Cardiac septum (tissue), 1 donor: ENCODE measurements at regions of chr2 and their contacts with region 1.

Region 1: DNA sequence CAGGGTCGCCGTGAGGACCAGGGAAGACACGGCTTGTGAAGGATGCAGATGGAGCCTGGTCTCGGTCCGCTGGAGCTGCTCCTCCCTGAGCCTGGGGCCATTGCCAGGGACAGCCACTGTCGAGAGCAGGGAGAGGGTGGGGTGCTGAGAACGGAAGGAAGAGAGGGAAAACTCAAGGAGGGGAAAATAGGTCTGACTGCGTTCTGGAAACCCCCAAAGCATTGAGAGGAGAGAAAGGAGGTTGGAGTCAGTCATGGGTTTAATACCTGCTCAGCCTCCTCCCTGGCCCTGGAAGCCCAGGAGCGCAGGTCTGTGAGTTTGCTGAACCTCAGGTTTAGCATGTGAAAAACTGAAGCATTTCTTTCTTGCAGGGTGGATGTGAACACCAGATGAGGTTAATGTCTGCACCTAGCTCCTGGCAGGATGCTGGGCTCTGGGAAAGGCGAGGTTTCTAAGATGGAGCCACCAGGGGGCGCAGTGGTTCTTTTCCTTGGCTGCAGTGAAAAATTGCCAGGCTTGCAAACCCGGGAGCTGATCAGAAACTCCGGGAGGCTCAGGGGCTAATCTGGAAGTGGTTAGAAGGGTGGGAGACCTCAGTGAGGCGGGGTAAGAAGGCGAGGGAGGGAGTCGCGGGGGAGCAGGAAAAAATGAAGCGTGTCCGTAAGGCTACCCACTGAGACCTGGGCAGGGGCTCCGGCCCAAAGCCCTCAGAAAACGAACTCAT is 33.6 kb upstream of the RNF149 start:
- DNase-seq: peak; percentile 91

Region 2: DNA sequence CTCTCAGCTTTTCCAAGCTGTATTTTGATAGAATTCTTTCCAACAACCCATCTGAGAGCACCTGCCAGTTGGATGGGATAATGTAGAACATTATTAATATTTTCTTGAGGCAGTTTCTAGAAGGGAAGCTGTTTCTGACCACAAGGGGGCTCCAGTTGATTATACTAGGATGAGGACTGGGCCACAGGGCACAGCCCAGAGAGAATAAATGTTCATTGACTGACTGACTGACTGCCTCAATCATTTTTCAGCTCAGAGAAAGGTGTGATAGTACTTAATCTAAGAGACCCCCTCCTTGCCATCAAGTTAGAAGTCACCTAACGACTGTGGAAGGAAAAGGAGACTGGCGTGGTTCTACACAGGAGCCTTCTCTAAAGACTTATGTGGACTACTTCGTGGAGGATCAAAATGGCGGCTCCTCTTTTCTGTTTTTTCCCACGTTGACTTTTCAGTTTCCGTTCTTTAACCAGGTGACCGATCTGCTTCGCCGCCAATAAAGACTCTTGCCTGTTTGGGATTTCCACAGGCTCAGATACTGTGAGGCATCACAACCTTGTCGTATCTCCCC is 77.1 kb after region 1 on chr2:
- intact Hi-C with region 1: loop called (anchors 10 kb)
- DNase-seq: no peak

Region 3: DNA sequence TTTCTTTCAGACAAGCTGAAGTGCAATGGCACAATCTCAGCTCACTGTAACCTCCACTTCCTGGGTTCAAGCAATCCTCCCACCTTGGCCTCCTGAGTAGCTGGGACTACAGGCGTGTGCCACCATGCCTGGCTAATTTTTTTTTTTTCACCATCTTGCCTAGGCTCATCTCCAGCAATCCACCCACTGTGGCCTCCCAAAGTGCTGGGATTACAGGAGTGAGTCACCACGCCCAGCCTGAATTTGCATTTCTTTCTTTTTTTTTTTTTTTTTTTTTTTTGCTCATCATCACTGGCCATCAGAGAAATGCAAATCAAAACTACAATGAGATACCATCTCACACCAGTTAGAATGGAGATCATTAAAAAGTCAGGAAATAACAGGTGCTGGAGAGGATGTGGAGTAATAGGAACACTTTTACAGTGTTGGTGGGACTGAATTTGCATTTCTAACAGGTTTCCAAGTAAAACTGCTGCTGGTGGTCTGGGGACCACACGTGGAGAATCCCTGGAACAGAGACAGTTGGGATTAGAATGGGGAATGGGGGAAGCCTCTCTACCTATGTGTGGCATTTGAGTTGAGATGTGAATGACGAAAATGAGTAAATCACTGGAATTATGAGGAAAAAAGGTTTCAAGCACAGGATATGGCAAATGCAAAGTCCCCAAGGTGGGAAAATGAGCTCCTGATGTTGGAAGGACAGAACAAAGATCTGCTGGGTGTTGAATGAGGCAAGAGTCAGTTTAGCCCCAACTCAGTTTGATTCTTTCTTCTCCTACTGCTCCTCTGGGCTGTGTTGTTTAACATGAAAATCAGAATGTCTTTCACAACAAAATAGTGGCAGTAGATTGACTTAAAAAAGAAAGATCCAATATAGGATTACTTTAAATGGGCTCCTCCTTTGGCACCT is 266.6 kb after region 1 on chr2:
- intact Hi-C with region 1: no loop called
- DNase-seq: no peak